ENCODE measurements at regions of chr22 and their contacts with region 1.

Region 1: GRCh38 chr22:35834061-35834460 is 116.4 kb downstream of the APOL5 start:
- DNase-seq: no peak
- H3K4me3 ChIP-seq: peak overlapping the region; percentile 55; the same call in 1 of the 2 replicates
- H3K27ac ChIP-seq: peak overlapping the region; percentile 93
- H3K4me1 ChIP-seq: peaks cover 57% of the 10 kb centered on the region
- H3K27me3 ChIP-seq: no peaks in the 10 kb centered on the region
- CTCF ChIP-seq: no peak

Region 2: DNA sequence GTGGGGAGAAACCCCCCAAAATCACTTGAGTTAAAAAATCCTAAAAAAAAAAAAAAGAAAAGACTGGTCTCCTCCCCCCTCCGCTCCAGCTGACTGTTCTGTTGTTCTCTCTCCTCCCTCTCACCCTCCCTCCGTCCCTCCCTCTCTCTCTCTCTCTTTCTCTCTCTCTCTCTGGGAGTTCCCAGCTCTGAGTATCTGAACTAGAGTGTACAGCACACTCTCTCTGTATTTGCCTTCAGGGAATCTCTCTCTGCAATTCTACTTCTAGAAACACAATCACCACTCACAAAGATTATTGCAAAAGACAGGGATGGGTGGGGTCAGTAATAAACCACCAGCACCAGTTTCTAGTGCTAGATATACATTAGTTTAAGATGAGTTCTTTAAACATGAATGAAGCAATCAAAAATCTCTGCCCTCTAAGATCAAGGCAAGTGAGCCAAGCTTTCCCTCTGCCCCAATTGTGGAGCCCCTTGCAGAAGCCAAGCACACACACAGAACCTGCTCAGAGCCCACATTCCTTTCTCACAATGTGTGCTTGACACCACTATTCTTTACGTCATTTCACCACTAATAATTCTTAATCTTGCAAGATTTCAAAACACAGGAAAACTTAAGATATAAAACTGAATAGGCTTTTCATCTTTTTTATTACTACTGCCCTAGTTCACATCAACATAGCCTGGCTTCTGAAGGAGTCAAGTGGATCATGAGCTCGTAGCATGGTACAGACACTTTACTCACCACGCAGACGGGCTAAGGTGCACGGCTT is 61.1 kb after region 1 on chr22:
- CTCF ChIA-PET with region 1: no interaction called
- POLR2A ChIA-PET with region 1: no interaction called
- intact Hi-C with region 1: loop called (anchors 1 kb)
- DNase-seq: peak; percentile 49 to 100
- H3K4me3 ChIP-seq: peak overlapping the region; percentile 33; the same call in 1 of the 2 replicates
- H3K27ac ChIP-seq: peak overlapping the region; percentile 94
- H3K4me1 ChIP-seq: peaks cover 52% of the 10 kb centered on the region
- H3K27me3 ChIP-seq: no peaks in the 10 kb centered on the region
- CTCF ChIP-seq: peak; percentile 54

Region 3: DNA sequence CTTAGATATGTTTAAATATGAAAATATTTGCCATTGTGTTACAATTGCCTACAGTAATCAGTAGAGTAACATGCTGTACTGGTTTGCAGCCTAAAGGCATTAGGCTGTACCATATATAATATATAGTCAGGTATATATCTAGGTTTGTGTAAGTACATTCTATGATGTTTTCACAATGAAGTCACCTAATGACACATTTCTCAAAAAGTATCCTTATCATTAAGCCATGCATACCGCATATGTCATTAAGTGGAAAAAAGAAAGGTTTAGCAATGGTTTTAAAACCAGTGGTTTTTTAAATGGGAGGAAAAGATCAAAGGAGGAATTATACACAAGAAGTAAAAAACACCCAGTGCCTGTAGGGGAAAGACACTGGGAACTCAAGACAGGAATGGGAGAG is 71.8 kb after region 1 on chr22:
- CTCF ChIA-PET with region 1: no interaction called
- POLR2A ChIA-PET with region 1: no interaction called
- intact Hi-C with region 1: no loop called
- DNase-seq: peak in 1 of 2 experiments; percentile 63
- H3K4me3 ChIP-seq: no peak overlapping the region
- H3K27ac ChIP-seq: no peak overlapping the region
- H3K4me1 ChIP-seq: peaks cover 65% of the 10 kb centered on the region
- H3K27me3 ChIP-seq: no peaks in the 10 kb centered on the region
- CTCF ChIP-seq: no peak